ENCODE measurements at regions of chr3 and their contacts with region 1.

Region 1: GRCh38 chr3:72818092-72818773 is 30.0 kb downstream of the SHQ1 start:
- DNase-seq: no peak
- ATAC-seq: no peak
- H3K4me3 Mint-ChIP-seq: no peak overlapping the region
- H3K27ac Mint-ChIP-seq: peak overlapping the region; percentile 38
- H3K4me1 Mint-ChIP-seq: peaks cover 25% of the 10 kb centered on the region
- H3K27me3 Mint-ChIP-seq: no peaks in the 10 kb centered on the region

Region 2: DNA sequence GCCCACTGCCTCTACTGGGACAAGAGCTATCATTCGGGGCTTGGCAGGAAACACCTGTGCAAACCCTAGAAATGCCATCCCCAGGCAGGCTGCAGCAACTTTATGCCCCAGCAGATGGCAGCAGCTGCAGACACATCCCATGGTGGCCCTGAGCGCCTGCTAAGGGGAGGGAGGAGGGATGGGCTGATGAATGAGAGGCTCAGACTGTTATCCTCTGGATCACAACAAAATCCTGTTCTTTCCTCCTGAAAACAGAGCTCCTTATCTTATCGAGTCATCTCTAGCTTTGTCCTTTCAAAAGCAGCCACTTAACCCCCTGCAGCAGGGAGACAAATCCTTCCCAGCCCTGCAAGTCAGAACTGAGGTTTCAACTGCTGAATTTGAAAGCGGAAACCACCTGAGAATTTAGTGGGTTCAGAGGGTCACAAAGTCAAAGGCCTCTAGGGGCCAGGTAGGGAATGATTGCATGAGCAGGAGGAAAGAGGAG is 942.7 kb before region 1 on chr3:
- CTCF ChIA-PET with region 1: interaction called, 22 read pairs
- POLR2A ChIA-PET with region 1: no interaction called
- intact Hi-C with region 1: loop called (anchors 1 kb)
- DNase-seq: peak; percentile 90
- ATAC-seq: peak; percentile 90
- H3K4me3 Mint-ChIP-seq: no peak overlapping the region
- H3K27ac Mint-ChIP-seq: peak overlapping the region; percentile 89
- H3K4me1 Mint-ChIP-seq: peaks cover 35% of the 10 kb centered on the region
- H3K27me3 Mint-ChIP-seq: peaks cover 6% of the 10 kb centered on the region

Region 3: GRCh38 chr3:72270072-72270681 is 548.1 kb before region 1 on chr3:
- CTCF ChIA-PET with region 1: interaction called, 4 read pairs
- POLR2A ChIA-PET with region 1: no interaction called
- intact Hi-C with region 1: loop called in 1 of 2 experiments (anchors 10 kb)
- DNase-seq: peak; percentile 38
- ATAC-seq: peak; percentile 59
- H3K4me3 Mint-ChIP-seq: no peak overlapping the region
- H3K27ac Mint-ChIP-seq: peak overlapping the region; percentile 69
- H3K4me1 Mint-ChIP-seq: peaks cover 68% of the 10 kb centered on the region
- H3K27me3 Mint-ChIP-seq: peaks cover 3% of the 10 kb centered on the region

Region 4: DNA sequence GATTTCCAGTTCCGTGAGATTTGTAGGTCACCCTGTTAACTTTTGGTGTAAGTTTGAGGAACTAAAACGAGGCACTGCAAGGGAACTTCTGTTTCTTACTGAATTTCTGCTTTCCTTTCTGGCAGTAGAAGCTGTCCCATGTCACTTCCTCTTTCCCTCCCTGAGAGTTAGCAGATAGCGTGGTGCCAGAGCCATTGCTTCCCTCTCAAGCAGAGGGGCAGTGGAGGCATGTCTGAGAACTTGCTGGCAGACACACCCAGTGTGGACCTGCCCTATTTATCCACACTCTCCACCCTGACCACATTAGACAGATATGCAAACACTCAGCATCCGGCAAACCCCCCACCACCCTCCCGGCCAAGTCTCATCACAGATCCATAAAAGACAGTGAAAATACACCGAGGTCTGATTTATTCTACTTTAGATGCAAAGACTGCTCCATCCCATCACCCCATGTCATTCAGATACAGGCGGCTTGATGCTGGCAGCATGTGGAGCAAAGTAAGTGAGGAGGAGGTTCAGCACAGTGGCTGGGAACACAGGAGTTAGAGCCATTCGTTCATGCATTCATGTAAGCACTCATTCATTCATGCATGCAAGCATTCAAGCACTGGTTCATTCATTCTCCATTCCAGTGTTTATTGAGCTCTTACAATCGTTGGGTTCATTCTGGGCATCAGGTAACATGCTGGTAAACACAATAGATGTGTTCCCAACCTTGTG is 294.6 kb before region 1 on chr3:
- CTCF ChIA-PET with region 1: no interaction called
- POLR2A ChIA-PET with region 1: no interaction called
- intact Hi-C with region 1: loop called in 1 of 2 experiments (anchors 5 kb)
- DNase-seq: no peak
- ATAC-seq: no peak
- H3K4me3 Mint-ChIP-seq: no peak overlapping the region
- H3K27ac Mint-ChIP-seq: peak overlapping the region; percentile 55
- H3K4me1 Mint-ChIP-seq: peaks cover 45% of the 10 kb centered on the region
- H3K27me3 Mint-ChIP-seq: no peaks in the 10 kb centered on the region

Region 5: DNA sequence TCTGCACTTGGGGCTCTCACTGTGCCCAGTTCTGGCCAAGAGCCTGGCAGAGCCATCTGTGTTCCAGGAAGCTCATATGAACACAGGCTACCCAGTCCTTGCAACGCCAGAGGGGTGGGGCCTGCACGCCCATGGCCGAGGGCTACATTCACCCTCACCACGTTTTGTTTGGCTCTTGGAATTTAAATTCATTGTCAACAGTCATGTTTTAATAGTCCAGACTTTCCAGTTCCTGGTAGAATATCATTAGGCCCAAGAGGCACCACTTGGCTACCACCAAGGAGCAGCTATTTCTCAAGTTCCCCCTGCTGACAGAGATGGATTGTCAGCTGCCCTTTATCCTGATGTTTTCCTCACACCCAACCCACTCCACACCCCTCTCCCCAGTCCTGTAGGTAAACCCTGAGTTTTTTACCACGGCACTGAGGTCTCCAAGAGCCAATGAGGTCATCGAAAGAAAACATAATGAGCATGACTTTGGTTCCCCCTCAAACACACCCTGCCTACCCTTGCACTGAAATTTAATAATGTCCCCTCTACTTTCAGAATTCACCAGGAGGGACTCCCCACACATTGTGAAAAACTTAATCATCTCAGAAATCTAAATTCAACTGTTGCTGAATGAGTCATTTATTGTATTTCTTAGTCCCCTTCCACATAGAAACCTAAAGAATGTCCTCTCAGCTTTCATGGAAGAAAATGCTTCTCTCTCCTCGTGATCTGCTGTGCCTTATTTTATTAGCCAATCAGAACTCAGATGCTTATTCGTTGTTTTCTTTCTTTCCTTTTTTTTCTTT is 95.1 kb before region 1 on chr3:
- CTCF ChIA-PET with region 1: interaction called, 6 read pairs
- POLR2A ChIA-PET with region 1: no interaction called
- intact Hi-C with region 1: loop called in 1 of 2 experiments (anchors 1 kb)
- DNase-seq: peak; percentile 16
- ATAC-seq: peak; percentile 95
- H3K4me3 Mint-ChIP-seq: no peak overlapping the region
- H3K27ac Mint-ChIP-seq: peak overlapping the region; percentile 61
- H3K4me1 Mint-ChIP-seq: peaks cover 19% of the 10 kb centered on the region
- H3K27me3 Mint-ChIP-seq: peaks cover 5% of the 10 kb centered on the region

Measured in activated CD4-positive, alpha-beta T cell treated with anti-CD3 and anti-CD28 coated beads for 36 hours (primary cell).